ENCODE measurements at regions of chrX and their contacts with region 1.

Region 1: DNA sequence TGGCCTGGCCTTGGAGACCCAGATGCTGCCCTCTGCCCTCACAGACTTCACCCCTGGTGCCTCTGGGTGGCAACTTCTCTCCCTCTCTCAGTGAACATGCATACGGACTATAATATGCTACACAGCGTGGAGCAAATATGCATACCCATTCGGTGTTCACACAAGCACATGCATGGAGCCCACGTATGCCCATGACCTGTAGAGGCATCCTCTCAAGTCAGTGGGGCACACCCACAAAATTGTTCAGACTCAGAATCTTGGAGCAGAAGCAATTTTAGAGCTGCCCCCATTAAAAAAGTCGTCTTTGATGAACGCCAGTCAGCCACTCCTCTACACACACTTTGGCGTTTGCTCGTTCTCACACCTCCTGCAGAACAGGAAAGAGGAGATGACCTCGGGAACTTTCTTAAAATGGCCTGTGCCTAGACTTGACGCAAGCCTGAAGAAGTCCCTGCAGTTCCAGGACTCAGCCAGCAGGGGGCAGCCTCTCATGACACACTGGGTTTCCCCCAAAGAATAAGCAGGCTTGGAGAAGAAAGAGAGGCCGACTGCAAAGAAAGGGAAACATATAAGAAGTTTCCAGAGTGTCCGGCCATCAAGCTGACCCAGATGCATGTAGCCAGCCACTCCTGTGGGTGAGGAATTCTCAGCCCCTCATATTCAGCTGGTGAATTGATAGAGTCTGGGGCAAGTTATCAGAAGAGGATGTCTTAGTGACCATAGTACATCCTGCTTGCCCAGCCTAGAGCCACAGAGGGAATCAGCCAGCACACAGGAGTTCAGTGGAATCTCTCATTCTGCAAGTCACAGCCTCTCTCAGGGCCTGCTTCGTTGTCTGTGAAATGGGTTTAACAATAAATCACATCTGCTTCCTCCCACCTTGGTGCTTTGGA is 17.3 kb downstream of the APLN start:
- DNase-seq: peak; percentile 65
- ATAC-seq: peak; percentile 66 to 74

Region 2: GRCh38 chrX:129176710-129177109 is 460.8 kb before region 1 on chrX:
- intact Hi-C with region 1: no loop called
- DNase-seq: no peak
- ATAC-seq: no peak

Region 3: DNA sequence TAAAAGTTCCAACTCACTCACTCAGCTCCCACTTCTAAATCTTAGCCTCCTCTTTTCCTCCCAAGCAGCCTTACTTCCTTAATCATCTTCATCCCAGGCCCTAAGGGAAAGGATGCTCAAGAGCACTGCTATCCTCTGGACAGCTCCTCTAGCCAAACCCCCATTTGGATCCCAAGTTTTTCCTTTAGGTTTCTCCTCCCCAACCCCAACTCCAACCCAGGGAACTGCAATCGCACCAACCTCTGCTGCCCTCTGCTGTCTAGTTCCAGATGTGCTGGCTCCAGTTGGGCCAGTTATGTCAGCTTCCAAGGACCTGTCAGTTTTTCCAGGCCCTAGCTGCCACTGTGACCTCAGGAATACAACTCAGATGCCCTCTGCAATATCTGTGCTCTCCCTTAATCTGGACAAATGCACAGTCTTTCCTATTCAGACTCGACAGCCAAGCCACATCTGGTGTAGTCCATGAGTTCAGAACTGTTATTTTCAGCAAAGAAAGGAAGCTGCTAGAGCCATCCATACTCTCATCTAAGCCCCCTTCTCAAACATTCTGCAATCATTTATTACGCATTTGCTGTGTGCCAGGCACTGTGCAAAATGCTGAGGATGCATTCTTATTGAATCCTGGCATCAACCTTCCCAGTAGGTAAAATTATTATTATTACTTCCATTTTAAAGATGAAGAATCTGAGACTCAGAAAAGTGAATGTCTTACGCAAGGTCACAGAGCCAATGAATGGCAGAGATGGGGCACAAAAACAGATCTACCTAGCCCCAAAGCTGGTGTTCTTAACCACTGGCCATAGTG is 89.0 kb after region 1 on chrX:
- intact Hi-C with region 1: loop called (anchors 2 to 5 kb)
- DNase-seq: peak; percentile 60
- ATAC-seq: peak; percentile 81 to 88